ENCODE measurements at regions of chrX and their contacts with region 1.

Region 1: GRCh38 chrX:1391707-1392375 is at the start of gene SLC25A6:
- DNase-seq: peak; percentile 99
- H3K4me3 Mint-ChIP-seq: peak within 1 kb of the TSS; percentile 91
- H3K27ac Mint-ChIP-seq: peak within 1 kb of the TSS; percentile 90
- H3K4me1 Mint-ChIP-seq: peaks cover 63% of the 10 kb centered on the region
- H3K27me3 Mint-ChIP-seq: no peaks in the 10 kb centered on the region
- total RNA-seq, gene SLC25A6: 457 to 463 TPM

Region 2: GRCh38 chrX:386768-387575 is 1004.9 kb before region 1 on chrX and contains the start of gene PPP2R3B:
- CTCF ChIA-PET with region 1: no interaction called
- intact Hi-C with region 1: loop called (anchors 1 kb)
- DNase-seq: peak; percentile 98
- H3K4me3 Mint-ChIP-seq: peak within 1 kb of the TSS; percentile 82
- H3K27ac Mint-ChIP-seq: peak within 1 kb of the TSS; percentile 94
- H3K4me1 Mint-ChIP-seq: peaks cover 12% of the 10 kb centered on the region
- H3K27me3 Mint-ChIP-seq: no peaks in the 10 kb centered on the region
- total RNA-seq, gene PPP2R3B: 33.8 to 37.2 TPM

Region 3: GRCh38 chrX:1591102-1591900 is 199.5 kb after region 1 on chrX and contains the start of gene AKAP17A:
- CTCF ChIA-PET with region 1: no interaction called
- intact Hi-C with region 1: loop called (anchors 1 kb)
- DNase-seq: peak; percentile 98
- H3K4me3 Mint-ChIP-seq: peak within 1 kb of the TSS; percentile 91
- H3K27ac Mint-ChIP-seq: peak within 1 kb of the TSS; percentile 89
- H3K4me1 Mint-ChIP-seq: peaks cover 31% of the 10 kb centered on the region
- H3K27me3 Mint-ChIP-seq: no peaks in the 10 kb centered on the region
- total RNA-seq, gene AKAP17A: 59.2 to 60.5 TPM

Region 4: DNA sequence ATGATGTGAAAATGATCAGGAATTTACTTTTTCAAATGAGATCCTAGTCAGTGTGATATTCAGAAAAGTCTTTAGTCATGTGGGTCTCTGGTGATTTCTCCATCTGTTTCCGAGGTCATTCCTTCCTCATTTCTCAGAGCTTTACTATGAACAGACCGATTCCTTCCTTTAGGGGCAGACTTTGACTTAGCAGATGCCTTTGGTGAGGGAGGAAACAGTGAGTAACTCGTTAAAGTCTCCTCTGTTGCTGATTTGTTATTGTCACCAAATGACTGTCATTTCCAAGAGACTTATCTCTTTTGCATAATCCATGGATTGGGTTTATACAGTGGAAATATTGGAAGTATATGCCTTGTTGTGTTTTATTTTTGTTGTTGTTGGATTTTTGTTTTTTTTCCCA is 1223.1 kb after region 1 on chrX:
- CTCF ChIA-PET with region 1: no interaction called
- intact Hi-C with region 1: loop called (anchors 10 kb)
- DNase-seq: no peak
- H3K4me3 Mint-ChIP-seq: no peak overlapping the region
- H3K27ac Mint-ChIP-seq: no peak overlapping the region
- H3K4me1 Mint-ChIP-seq: peaks cover 33% of the 10 kb centered on the region
- H3K27me3 Mint-ChIP-seq: no peaks in the 10 kb centered on the region

Measured in activated naive CD4-positive, alpha-beta T cell treated with anti-CD3 and anti-CD28 coated beads for 36 hours (primary cell).